ENCODE measurements at regions of chr10 and their contacts with region 1.

Region 1: DNA sequence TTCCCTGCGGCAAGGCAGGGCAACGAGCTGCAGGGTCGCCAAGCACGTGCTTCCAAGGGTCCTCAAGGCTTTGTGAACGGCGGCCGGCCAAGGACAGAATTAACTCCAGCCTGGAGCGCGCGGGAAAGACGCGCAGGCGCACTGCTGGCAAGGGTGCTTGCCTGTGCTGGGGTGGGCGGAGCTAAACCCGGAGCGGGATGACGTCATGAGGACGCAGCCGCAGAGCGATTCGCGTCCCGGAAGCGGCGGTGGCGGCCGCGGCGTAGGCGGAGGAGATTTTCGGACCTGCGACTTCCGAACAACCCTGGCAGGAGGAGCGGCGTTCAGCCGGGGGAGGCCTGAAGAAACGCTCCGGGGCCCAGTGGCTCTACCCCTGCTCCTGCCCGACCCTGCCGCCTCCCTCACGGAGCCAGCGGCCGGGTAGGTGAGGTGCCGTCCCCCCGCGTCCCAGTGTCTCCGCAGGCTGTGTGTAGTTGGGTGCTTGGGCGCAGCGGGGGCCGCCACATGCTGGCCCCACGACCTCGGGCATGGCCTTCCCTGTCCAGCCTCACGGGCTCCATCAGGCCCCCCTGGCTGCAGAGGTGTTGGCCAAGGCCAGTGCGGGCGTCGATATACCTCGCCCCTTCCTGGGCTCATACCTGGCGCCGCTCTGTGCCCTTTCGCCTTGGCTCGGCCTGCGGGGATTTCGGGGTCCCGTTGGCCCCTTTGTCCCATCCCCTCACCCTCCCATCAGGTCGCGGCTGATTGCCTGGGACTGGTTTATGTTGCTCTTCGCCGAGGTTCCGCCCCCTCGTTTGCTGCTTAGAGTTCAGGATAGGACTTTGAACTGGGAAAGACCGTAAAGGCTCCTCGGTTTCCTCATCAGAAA is at the start of gene ZFYVE27:
- DNase-seq: peak; percentile 95 to 99 (median 98)
- ATAC-seq: peak; percentile 93 to 98 (median 96)
- H3K4me3 ChIP-seq: peak within 1 kb of the TSS; percentile 89 to 99 (median 92)
- H3K27ac ChIP-seq: peak within 1 kb of the TSS; percentile 82 to 92 (median 88)
- H3K4me1 ChIP-seq: peaks cover 0 to 15% (median 6%) of the 10 kb centered on the region in 3 donors
- H3K27me3 ChIP-seq: no peaks in the 10 kb centered on the region
- CTCF ChIP-seq: no peak
- total RNA-seq, gene ZFYVE27: 11.9 to 23.6 (median 14.3) TPM

Region 2: GRCh38 chr10:97425964-97426775 is 311.0 kb before region 1 on chr10 and contains the start of gene PGAM1:
- intact Hi-C with region 1: no loop called
- DNase-seq: peak; percentile 92 to 99 (median 97)
- ATAC-seq: peak; percentile 91 to 97 (median 94)
- H3K4me3 ChIP-seq: peak within 1 kb of the TSS; percentile 75 to 90 (median 82)
- H3K27ac ChIP-seq: peak within 1 kb of the TSS; percentile 53 to 92 (median 76)
- H3K4me1 ChIP-seq: peaks cover 8 to 17% (median 14%) of the 10 kb centered on the region in 3 donors
- H3K27me3 ChIP-seq: no peaks in the 10 kb centered on the region
- CTCF ChIP-seq: peak; percentile 15 to 57 (median 40)
- total RNA-seq, gene PGAM1: 31.4 to 72.8 (median 46.6) TPM

Region 3: DNA sequence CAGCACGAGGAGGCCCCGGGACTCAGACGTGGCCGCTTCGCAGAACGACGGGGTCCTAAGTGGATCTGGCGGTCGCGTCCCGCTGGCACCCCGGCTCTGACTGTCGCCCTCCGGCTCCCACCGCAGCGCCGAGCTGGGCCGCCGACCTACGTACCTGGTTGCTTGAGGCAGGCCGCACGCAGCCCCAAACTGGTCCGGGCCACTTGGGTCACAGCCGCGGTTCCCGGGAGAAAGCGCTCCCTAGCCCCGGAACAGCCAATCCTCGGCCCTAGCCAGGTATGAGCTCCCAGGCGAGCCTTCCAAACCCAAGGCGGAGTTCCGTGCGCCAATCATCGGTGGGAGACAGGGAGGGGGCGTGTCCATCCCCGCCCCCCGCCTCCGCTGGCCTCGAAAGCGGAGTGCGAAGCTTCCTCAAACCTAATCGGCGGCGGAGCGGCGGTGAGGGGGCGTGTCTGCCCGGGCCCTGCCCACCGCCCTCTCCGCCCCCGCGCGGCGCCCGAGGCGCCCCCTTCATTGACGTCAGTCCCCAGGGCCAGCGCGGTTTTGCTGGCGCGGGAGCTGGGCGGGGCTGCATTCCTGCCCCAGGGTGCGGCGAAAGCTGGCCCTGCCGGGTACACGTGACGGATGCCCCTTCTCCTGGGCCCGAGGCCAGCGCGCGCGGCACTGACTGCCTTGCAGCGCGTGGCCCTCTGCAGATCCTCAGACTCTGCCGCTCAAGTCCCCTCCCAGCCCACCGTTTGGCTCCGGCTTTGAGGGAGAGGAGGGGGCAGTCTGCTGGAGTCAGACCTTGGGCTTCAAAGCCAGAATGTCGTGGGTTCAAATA is 50.0 kb before region 1 on chr10 and contains the start of gene AVPI1:
- intact Hi-C with region 1: loop called in 1 of 3 experiments (anchors 10 kb)
- DNase-seq: peak; percentile 97 to 99 (median 98)
- ATAC-seq: peak; percentile 88 to 94 (median 92)
- H3K4me3 ChIP-seq: peak within 1 kb of the TSS; percentile 39 to 71 (median 52)
- H3K27ac ChIP-seq: peak within 1 kb of the TSS; percentile 69 to 87 (median 82)
- H3K4me1 ChIP-seq: peaks cover 15 to 43% (median 19%) of the 10 kb centered on the region in 3 donors
- H3K27me3 ChIP-seq: no peaks in the 10 kb centered on the region
- CTCF ChIP-seq: no peak
- total RNA-seq, gene AVPI1: 3.7 to 6.2 (median 4.6) TPM

Region 4: DNA sequence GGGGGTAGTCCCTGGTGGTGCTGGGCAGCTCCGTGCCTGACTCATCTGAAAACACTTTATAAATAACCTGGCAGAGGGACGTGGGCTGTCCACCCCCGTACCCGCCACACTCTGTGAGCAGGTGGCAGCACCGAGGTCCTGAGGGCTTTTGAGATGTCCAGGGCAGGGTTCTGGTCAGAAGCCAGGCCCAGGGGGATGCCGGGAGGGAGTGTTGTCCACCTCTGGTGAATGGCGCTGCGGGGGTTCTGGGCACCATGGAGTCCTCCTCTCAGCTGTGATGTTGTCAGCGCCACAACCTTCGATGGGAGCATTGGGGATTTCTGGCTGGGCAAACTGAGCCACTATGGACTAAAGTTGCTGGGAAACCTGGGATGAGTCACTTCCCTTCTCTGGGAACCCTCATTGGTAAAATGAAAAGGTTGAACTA is 85.1 kb after region 1 on chr10:
- intact Hi-C with region 1: no loop called
- DNase-seq: peak in 2 of 6 donors; percentile 28 to 29
- ATAC-seq: peak; percentile 16 to 73 (median 72)
- H3K4me3 ChIP-seq: no peak overlapping the region
- H3K27ac ChIP-seq: peak overlapping the region in 1 of 4 donors; percentile 17
- H3K4me1 ChIP-seq: no peaks in the 10 kb centered on the region
- H3K27me3 ChIP-seq: no peaks in the 10 kb centered on the region
- CTCF ChIP-seq: no peak

Region 5: GRCh38 chr10:97875391-97875790 is 138.3 kb after region 1 on chr10:
- intact Hi-C with region 1: no loop called
- DNase-seq: peak in 1 of 6 donors; percentile 39
- ATAC-seq: no peak
- H3K4me3 ChIP-seq: no peak overlapping the region
- H3K27ac ChIP-seq: no peak overlapping the region
- H3K4me1 ChIP-seq: no peaks in the 10 kb centered on the region
- H3K27me3 ChIP-seq: no peaks in the 10 kb centered on the region
- CTCF ChIP-seq: no peak

Measured in pancreas (tissue), 10 donors.